Activated T-helper 1 cell treated with anti-CD3 and anti-CD28 coated beads, Interleukin-12 subunit alpha, Interleukin-12 subunit beta, Interleukin-2, Interleukin-4 antibody, amounts not matched to agents 30 ng/mL and 10 ng/mL and 1 ng/mL, durations not matched to agents 14 hours and 24 hours and 36 hours (primary cell): ENCODE measurements at regions of chr20 and their contacts with region 1.

Region 1: GRCh38 chr20:5950271-5951031 is at the starts of genes MCM8 and TRMT6:
- DNase-seq: peak; percentile 95
- H3K4me3 Mint-ChIP-seq: peak within 1 kb of the TSS; percentile 90
- H3K27ac Mint-ChIP-seq: peak within 1 kb of the TSS; percentile 91
- H3K4me1 Mint-ChIP-seq: peaks cover 56% of the 10 kb centered on the region
- H3K27me3 Mint-ChIP-seq: peaks cover 2% of the 10 kb centered on the region
- total RNA-seq, gene MCM8: 36.5 and 38.8 TPM in 2 replicates
- total RNA-seq, gene TRMT6: 36.1 and 38.9 TPM in 2 replicates

Region 2: GRCh38 chr20:5996765-5997164 is 46.3 kb after region 1 on chr20:
- intact Hi-C with region 1: loop called (anchors 1 kb)
- DNase-seq: peak; percentile 57
- H3K4me3 Mint-ChIP-seq: peak overlapping the region; percentile 2
- H3K27ac Mint-ChIP-seq: peak overlapping the region; percentile 77
- H3K4me1 Mint-ChIP-seq: peaks cover 21% of the 10 kb centered on the region
- H3K27me3 Mint-ChIP-seq: no peaks in the 10 kb centered on the region

Region 3: DNA sequence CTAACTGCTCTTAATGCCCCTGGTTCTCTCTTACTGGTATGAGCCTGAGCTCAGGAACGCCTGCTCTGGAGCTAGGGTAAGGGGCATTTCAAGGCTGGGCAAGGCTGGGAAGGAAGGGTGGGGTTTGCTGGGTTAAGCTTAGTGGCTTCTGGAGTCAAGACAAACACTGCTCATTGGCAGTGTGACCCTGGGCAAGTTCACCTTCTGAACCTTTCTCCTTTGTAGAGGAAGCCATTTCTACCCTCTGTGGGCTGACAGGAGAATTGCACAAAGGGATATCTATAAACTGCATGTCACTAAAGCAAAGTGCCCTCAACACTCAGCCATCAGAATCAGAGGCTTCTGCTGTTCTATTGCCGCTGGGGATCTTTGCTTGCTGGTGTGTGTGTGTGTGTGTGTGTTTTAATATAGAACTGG is 123.7 kb after region 1 on chr20:
- intact Hi-C with region 1: loop called (anchors 1 kb)
- DNase-seq: no peak
- H3K4me3 Mint-ChIP-seq: no peak overlapping the region
- H3K27ac Mint-ChIP-seq: no peak overlapping the region
- H3K4me1 Mint-ChIP-seq: no peaks in the 10 kb centered on the region
- H3K27me3 Mint-ChIP-seq: peaks cover 7% of the 10 kb centered on the region

Region 4: DNA sequence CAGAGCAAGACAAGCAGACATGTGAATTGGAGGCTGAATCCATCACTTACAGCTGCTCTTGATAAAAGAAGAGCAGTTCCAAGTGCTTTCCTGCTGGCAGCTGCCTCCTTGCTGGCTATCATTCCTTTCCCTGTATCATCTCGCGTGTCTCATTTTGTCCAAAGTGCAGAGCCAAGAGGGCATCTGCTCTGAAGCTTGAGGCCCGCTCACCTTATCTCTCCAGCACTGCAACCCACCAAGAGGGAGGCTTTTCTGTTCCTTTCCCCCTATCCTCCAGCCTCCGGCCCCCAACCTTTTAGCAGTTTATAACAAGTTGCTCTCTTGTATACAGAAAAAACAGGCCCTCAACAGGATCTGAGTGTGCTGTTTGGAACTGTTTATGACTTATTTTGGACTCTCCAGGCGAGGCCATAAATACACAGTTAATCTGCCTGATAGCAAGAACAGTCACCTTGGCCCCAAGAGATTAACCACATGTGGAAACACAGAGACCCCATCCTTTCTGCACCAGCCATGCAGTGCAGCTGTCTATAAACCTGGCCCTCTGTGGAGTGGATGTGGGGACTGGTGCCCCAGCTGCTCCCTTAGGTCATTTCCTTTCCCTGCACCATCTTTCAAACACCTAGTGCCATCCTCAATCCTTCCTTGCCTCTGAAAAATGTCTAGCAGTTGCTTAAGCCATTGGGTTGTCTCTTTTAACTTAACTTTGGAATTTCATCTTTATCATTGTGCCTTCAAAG is 344.8 kb after region 1 on chr20:
- intact Hi-C with region 1: no loop called
- DNase-seq: no peak
- H3K4me3 Mint-ChIP-seq: no peak overlapping the region
- H3K27ac Mint-ChIP-seq: peak overlapping the region; percentile 49
- H3K4me1 Mint-ChIP-seq: no peaks in the 10 kb centered on the region
- H3K27me3 Mint-ChIP-seq: no peaks in the 10 kb centered on the region